ENCODE measurements at regions of chr2 and their contacts with region 1.

Region 1: GRCh38 chr2:65432227-65433190 is at the start of gene SPRED2:
- DNase-seq: peak; percentile 90 to 91 (median 91)
- ATAC-seq: peak; percentile 65
- H3K4me3 ChIP-seq: peak within 1 kb of the TSS; percentile 52
- H3K4me1 ChIP-seq: peaks cover 25% of the 10 kb centered on the region
- CTCF ChIP-seq: no peak
- total RNA-seq, gene SPRED2: 38.1 to 65.0 (median 43.4) TPM

Region 2: DNA sequence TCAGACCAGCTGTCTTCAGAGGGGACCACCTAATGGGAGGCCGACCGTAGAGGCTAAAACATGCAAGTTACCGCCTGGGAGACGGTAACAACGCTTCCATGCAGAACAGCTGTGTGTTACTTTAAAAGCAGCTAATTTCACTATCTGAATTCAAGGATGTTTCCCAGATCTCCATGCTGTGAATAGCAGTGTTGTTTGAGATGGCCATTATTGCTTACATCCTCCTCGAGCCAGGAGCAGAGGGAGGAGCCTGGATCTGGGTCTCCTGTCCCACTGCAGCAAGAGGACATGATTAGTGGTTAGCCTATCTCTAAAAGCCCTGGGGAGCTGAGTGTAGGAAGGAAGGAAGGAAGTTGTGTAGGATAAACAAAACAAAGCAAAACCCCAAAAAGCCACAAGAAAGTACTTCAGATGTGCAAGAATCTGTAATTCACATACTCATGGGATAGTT is 154.0 kb before region 1 on chr2:
- intact Hi-C with region 1: no loop called
- DNase-seq: no peak
- ATAC-seq: no peak
- H3K4me3 ChIP-seq: no peak overlapping the region
- H3K4me1 ChIP-seq: no peaks in the 10 kb centered on the region
- CTCF ChIP-seq: no peak

Region 3: DNA sequence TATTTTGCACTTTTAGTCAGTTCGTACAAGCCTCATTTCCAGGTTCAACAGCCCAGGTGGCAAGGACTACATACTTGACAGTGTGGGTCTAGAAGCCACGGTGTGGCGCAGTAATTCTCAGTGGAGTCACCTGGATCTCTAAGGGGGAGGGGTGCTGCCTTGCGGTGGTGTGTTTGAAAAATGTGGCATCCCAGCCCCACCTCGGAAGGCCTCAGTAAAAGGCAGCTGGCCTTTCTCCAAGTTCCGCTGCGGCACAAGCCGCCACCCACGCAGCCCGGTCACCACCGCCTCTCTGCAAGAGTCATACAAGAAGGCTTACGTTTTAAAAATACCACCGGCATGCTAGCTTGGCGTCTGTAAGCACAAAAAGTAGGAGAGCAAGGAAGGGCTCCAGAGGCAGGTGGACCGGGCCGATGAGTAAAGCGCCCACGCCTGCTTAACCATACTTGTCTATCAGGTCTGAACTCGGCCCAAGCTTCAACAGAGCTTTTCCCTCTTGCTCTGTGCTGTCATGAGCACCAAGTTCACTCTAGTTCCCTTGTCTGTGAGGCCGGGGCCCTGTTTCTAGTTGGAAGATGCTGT is 49.6 kb before region 1 on chr2:
- intact Hi-C with region 1: loop called in 1 of 2 experiments (anchors 10 kb)
- DNase-seq: peak; percentile 90 to 93 (median 90)
- ATAC-seq: peak; percentile 80
- H3K4me3 ChIP-seq: no peak overlapping the region
- H3K4me1 ChIP-seq: peaks cover 36% of the 10 kb centered on the region
- CTCF ChIP-seq: peak; percentile 19

Region 4: DNA sequence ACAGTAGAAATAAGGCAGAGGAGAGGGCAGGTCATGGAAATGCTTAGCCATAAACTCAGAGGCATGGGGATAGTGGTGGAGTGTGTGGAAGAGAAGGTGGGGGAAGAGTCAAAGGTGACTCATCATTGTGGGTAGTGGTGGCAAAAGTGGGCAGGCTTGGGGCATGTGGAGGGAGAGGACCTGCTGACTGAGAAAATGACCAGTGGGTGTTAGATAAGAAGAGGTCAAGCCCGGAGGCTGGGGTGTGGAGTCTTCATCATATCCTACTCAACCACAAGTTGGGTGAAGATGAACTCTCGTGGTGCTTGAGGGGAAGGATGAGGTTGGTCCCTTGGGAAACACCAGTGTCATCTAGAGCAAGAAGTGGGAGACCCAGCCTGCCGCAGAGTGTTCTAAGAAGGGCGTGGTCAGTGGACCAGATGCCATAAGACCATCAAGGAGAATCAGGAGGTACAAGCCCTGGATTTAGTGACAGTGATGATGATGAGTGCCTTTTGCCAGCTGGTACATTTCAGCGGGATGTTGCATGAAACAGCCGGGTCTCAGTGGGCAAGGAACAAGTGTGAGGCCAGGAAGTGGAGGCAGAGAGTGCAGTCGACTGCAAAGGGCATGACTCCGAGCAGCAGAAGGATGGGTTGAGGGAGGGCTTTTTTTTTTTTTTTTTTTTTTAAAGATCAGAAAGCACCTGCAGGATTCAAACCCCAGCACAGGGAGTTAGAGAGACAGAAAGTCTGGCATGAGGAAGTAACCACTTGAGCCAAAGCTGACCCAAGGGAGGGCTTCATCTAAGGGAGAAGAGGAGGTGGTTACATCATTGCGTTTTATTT is 122.5 kb after region 1 on chr2:
- intact Hi-C with region 1: loop called in 1 of 2 experiments (anchors 5 kb)
- DNase-seq: no peak
- ATAC-seq: no peak
- H3K4me3 ChIP-seq: no peak overlapping the region
- H3K4me1 ChIP-seq: no peaks in the 10 kb centered on the region
- CTCF ChIP-seq: no peak

Measured in mucosa of descending colon (tissue), 3 donors.